Activated B cell treated with CpG ODN at 0.5 μM for 24 hours (primary cell): ENCODE measurements at regions of chr16 and their contacts with region 1.

Region 1: GRCh38 chr16:352547-353403 is at the start of gene AXIN1:
- DNase-seq: peak; percentile 100
- ATAC-seq: peak; percentile 89
- H3K4me3 Mint-ChIP-seq: peak within 1 kb of the TSS; percentile 85
- H3K27ac Mint-ChIP-seq: peak within 1 kb of the TSS; percentile 77
- H3K4me1 Mint-ChIP-seq: peaks cover 32% of the 10 kb centered on the region
- H3K27me3 Mint-ChIP-seq: no peaks in the 10 kb centered on the region
- CTCF ChIP-seq: no peak
- total RNA-seq, gene AXIN1: 27.9 and 30.6 TPM in 2 replicates

Region 2: DNA sequence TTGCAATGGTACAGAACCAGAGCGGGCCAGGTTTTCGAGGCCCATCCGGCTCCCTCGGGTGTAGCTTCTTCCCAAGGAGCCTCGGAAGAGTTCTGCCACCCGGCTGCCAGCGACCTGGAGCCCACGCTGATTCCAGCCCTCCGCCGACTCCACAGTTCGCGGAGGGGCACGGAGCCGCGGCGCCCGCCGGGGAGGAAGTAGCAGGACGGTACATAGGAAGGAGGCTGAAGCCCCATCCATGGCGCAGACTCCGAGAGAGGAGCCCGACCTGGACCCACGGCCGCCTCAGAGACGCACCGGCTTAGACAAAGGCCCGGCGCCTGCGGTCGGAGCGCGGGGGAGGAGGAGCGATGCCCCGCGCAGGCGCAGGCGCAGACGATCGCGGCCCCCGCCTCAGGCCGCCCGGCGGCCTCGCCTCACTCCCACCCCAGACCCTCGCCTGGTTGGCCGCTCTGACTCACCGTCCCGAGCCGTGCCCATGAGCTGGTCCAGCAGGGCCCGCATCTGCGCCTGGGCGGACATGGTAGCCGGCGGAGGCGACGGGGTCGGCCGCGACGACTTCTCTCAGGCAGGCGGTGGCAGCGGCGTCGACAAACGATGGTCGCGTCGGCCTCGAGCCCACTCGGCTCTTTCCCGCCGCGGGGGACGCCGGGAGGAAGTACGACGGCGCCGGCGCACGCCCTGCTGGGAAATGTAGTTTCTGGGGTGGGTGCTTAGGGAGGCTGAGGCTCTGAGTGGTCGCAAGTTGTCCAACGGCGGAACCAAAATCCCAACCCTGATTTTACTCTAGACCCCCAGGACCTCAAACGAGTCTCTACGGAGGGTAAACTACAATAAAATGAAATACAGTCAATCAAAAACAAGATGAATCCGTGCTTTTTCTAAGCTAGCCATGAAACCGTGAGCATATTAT is 123.7 kb before region 1 on chr16 and contains the start of gene LUC7L:
- CTCF ChIA-PET with region 1: no interaction called
- POLR2A ChIA-PET with region 1: interaction called, 27 read pairs
- intact Hi-C with region 1: loop called (anchors 1 kb)
- DNase-seq: peak; percentile 89
- ATAC-seq: peak; percentile 90
- H3K4me3 Mint-ChIP-seq: peak within 1 kb of the TSS; percentile 86
- H3K27ac Mint-ChIP-seq: peak within 1 kb of the TSS; percentile 89
- H3K4me1 Mint-ChIP-seq: peaks cover 27% of the 10 kb centered on the region
- H3K27me3 Mint-ChIP-seq: no peaks in the 10 kb centered on the region
- CTCF ChIP-seq: no peak
- total RNA-seq, gene LUC7L: 85.0 and 100 TPM in 2 replicates

Region 3: GRCh38 chr16:309476-309875 is 43.3 kb before region 1 on chr16:
- CTCF ChIA-PET with region 1: interaction called, 3 read pairs
- POLR2A ChIA-PET with region 1: interaction called, 10 read pairs
- intact Hi-C with region 1: no loop called
- DNase-seq: no peak
- ATAC-seq: no peak
- H3K4me3 Mint-ChIP-seq: no peak overlapping the region
- H3K27ac Mint-ChIP-seq: no peak overlapping the region
- H3K4me1 Mint-ChIP-seq: peaks cover 5% of the 10 kb centered on the region
- H3K27me3 Mint-ChIP-seq: no peaks in the 10 kb centered on the region
- CTCF ChIP-seq: no peak

Region 4: DNA sequence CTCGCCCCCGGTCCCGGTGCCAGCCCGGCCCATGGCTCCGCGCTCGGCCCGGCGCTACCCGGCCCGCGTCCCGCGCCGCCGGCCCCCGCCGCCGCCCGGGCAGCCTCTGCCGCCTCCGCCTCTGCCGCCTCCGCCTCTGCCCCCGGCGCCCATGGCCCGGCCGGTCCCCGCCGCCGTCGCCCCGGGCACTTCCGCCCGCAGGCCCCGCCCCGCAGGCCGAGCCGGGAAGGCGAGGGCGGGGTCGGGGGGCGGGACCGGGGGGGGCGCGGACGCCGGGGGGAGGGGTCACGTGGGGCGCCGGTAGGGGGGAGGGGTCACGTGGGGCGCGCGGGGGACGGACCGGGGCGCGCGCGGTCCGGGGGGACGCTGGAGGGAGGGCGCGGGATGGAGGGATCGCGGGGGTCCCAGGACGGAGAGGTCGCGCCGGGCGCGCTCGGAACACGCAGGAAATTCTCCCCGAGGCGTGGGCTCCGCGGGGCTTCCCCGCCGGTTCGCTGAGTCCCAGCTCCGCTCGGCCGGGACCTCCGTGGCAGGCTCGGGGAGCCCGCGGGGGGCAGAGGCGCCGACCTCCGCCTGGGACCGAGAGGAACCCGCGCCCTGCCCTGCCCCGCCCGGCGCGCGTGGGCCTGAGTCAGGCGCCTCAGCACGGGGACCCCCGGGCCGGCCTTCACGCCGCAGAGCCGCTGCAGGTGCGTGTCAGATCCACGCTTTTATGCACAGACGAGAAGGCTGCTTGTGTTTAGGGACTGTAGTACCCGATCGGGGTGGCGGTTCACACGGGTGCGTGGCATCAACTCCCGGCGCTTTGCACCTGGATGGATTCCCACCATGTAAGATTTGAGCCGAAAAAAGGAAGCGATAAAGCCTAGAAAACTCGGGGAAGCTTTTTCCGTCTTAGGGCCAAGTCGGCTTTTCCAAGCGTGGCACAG is 29.3 kb after region 1 on chr16 and contains the start of gene PGAP6:
- CTCF ChIA-PET with region 1: no interaction called
- POLR2A ChIA-PET with region 1: interaction called, 14 read pairs
- intact Hi-C with region 1: loop called (anchors 1 kb)
- DNase-seq: peak; percentile 73
- ATAC-seq: peak; percentile 67
- H3K4me3 Mint-ChIP-seq: peak within 1 kb of the TSS; percentile 89
- H3K27ac Mint-ChIP-seq: peak within 1 kb of the TSS; percentile 78
- H3K4me1 Mint-ChIP-seq: peaks cover 33% of the 10 kb centered on the region
- H3K27me3 Mint-ChIP-seq: no peaks in the 10 kb centered on the region
- CTCF ChIP-seq: no peak
- total RNA-seq, gene PGAP6: 38.4 and 44.5 TPM in 2 replicates

Region 5: GRCh38 chr16:414395-415169 is 61.8 kb after region 1 on chr16:
- CTCF ChIA-PET with region 1: no interaction called
- POLR2A ChIA-PET with region 1: no interaction called
- intact Hi-C with region 1: no loop called
- DNase-seq: no peak
- ATAC-seq: no peak
- H3K4me3 Mint-ChIP-seq: no peak overlapping the region
- H3K27ac Mint-ChIP-seq: no peak overlapping the region
- H3K4me1 Mint-ChIP-seq: no peaks in the 10 kb centered on the region
- H3K27me3 Mint-ChIP-seq: no peaks in the 10 kb centered on the region
- CTCF ChIP-seq: no peak

Region 6: DNA sequence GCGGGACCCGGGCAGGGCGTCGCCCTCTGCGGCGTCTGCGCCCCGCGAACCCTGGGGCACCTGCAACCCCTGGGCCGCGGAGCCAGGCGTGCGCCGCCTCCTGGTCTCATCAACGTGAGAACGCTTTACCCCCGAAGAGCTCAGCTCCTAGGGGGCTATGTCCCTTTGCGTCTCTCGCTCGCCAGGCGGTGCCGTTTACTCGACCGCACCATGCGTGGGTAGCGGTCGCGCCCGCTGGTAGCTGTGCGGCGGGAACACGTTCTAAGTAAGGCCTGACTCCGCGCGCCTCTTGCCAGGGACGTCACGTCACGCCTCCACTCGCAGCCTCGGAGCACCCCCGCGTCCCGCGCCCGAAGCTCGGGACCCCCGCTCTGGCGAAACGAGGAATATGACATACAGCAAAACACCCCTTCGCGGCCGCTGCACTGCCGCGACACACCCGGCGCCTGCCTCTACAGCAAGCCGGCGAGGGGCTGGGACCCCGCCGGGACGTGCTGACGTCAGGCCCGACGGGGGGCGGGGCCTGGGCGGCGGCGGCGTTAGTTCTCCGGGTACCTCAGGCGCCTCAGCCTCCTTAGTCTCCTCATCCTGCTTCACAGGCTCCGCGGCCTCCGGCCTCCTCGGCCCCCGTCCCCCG is 72.4 kb after region 1 on chr16 and contains the start of gene RAB11FIP3:
- CTCF ChIA-PET with region 1: no interaction called
- POLR2A ChIA-PET with region 1: interaction called, 3 read pairs
- intact Hi-C with region 1: loop called (anchors 1 kb)
- DNase-seq: peak; percentile 93
- ATAC-seq: peak; percentile 92
- H3K4me3 Mint-ChIP-seq: peak within 1 kb of the TSS; percentile 89
- H3K27ac Mint-ChIP-seq: peak within 1 kb of the TSS; percentile 82
- H3K4me1 Mint-ChIP-seq: peaks cover 30% of the 10 kb centered on the region
- H3K27me3 Mint-ChIP-seq: no peaks in the 10 kb centered on the region
- CTCF ChIP-seq: no peak
- total RNA-seq, gene RAB11FIP3: 32.2 and 35.4 TPM in 2 replicates